Activated naive CD4-positive, alpha-beta T cell treated with anti-CD3 and anti-CD28 coated beads for 36 hours (primary cell): ENCODE measurements at regions of chr18 and their contacts with region 1.

Region 1: GRCh38 chr18:3454365-3455089 is 4.6 kb downstream of the TGIF1 start:
- DNase-seq: peak; percentile 31
- H3K4me3 Mint-ChIP-seq: peak overlapping the region; percentile 89
- H3K27ac Mint-ChIP-seq: peak overlapping the region; percentile 99
- H3K4me1 Mint-ChIP-seq: peaks cover 63% of the 10 kb centered on the region
- H3K27me3 Mint-ChIP-seq: no peaks in the 10 kb centered on the region

Region 2: DNA sequence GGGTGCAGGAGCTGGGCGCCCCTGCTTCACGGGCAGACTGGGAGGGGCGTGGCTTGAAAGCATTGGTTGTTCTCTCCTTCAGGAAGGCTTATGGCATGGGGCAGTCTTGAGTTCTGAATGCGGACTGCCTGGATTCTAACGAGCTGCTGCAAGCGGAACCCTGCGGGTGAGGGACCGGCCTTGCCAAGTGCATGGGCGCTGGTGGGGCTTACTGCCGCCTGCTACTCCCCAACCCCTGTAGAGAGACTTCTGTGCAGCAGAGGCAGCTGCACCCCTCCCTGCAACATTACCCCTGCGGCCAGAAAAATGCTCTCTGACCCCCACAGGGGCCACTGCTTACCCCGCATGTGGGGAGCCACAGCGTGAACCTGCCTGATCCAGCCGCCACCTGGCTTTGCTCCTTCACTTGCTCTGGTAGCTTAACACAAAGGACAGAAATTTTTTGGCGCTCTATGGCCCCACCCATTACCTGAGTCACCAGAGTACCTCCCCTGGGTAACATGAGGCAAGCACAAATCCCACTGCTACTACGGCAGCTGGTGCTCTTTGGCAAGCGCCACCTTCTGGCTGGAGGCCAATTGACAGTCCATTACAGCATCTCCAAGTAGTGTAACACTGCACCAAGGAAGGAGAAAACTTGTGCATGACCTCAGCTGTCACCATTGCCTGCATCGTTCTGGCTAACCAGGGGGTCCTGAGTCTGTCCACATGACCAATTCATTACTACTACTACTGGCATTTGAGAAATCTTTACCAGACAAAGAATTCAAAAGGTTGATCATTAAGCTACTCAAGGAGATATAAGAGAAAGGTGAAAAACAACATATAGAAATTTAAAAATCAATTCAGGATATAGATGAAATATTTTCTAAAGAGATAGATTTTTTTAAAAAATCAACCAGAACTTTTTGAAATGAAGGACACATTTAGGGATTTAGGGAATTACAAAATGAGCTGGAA is 157.2 kb before region 1 on chr18:
- CTCF ChIA-PET with region 1: interaction called, 24 read pairs
- intact Hi-C with region 1: loop called (anchors 1 kb)
- DNase-seq: peak; percentile 98
- H3K4me3 Mint-ChIP-seq: peak overlapping the region; percentile 93
- H3K27ac Mint-ChIP-seq: peak overlapping the region; percentile 79
- H3K4me1 Mint-ChIP-seq: peaks cover 3% of the 10 kb centered on the region
- H3K27me3 Mint-ChIP-seq: peaks cover 11% of the 10 kb centered on the region

Region 3: GRCh38 chr18:3380384-3380961 is 74.1 kb before region 1 on chr18:
- CTCF ChIA-PET with region 1: interaction called, 6 read pairs
- intact Hi-C with region 1: loop called (anchors 1 kb)
- DNase-seq: peak; percentile 37
- H3K4me3 Mint-ChIP-seq: no peak overlapping the region
- H3K27ac Mint-ChIP-seq: no peak overlapping the region
- H3K4me1 Mint-ChIP-seq: peaks cover 7% of the 10 kb centered on the region
- H3K27me3 Mint-ChIP-seq: no peaks in the 10 kb centered on the region

Region 4: DNA sequence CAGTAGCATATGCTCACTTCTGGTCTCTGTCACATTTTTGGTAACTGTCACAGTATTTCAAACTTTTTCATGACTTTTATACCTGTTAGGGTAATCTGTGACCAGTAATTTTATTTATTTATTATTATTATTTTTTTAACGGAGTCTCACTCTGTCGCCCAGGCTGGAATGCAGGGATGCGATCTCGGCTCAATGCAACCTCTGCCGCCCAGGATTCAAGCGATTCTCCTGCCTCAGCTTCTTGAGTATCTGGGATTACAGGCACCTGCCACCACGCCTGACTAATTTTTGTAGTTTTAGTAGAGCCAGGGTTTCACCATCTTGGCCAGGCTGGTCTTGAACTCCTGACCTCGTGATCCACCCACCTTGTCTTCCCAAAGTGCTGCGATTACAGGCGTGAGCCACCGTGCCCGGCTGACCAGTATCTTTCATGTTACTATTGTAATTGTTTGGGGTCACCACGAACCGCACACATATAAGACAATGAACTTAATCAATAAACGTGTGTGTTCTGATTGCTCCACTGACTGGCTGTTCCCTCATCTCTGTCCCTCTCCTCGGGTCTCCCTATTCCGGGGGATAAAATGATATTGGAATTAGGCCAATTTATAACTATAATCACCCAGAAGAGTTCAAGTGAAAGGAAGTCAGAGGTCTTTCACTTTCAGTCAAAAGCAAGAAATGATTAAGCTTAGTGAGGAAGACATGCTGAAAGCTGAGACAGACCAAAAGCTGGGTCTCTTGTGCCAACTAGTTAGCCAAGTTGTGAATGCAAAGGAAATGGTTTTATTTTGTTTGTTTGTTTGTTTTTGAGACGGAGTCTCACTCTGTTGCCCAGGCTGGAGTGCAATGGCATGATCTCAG is 18.4 kb after region 1 on chr18:
- CTCF ChIA-PET with region 1: interaction called, 4 read pairs
- intact Hi-C with region 1: loop called (anchors 1 kb)
- DNase-seq: peak; percentile 44
- H3K4me3 Mint-ChIP-seq: no peak overlapping the region
- H3K27ac Mint-ChIP-seq: no peak overlapping the region
- H3K4me1 Mint-ChIP-seq: peaks cover 11% of the 10 kb centered on the region
- H3K27me3 Mint-ChIP-seq: no peaks in the 10 kb centered on the region

Region 5: GRCh38 chr18:3585656-3586509 is 131.4 kb after region 1 on chr18:
- CTCF ChIA-PET with region 1: interaction called, 42 read pairs
- intact Hi-C with region 1: loop called (anchors 1 kb)
- DNase-seq: peak; percentile 88
- H3K4me3 Mint-ChIP-seq: no peak overlapping the region
- H3K27ac Mint-ChIP-seq: peak overlapping the region; percentile 1
- H3K4me1 Mint-ChIP-seq: peaks cover 36% of the 10 kb centered on the region
- H3K27me3 Mint-ChIP-seq: no peaks in the 10 kb centered on the region

Region 6: GRCh38 chr18:4412286-4412685 is 957.8 kb after region 1 on chr18:
- CTCF ChIA-PET with region 1: no interaction called
- intact Hi-C with region 1: no loop called
- DNase-seq: no peak
- H3K4me3 Mint-ChIP-seq: no peak overlapping the region
- H3K27ac Mint-ChIP-seq: no peak overlapping the region
- H3K4me1 Mint-ChIP-seq: no peaks in the 10 kb centered on the region
- H3K27me3 Mint-ChIP-seq: no peaks in the 10 kb centered on the region